ENCODE measurements at regions of chr6 and their contacts with region 1.

Region 1: DNA sequence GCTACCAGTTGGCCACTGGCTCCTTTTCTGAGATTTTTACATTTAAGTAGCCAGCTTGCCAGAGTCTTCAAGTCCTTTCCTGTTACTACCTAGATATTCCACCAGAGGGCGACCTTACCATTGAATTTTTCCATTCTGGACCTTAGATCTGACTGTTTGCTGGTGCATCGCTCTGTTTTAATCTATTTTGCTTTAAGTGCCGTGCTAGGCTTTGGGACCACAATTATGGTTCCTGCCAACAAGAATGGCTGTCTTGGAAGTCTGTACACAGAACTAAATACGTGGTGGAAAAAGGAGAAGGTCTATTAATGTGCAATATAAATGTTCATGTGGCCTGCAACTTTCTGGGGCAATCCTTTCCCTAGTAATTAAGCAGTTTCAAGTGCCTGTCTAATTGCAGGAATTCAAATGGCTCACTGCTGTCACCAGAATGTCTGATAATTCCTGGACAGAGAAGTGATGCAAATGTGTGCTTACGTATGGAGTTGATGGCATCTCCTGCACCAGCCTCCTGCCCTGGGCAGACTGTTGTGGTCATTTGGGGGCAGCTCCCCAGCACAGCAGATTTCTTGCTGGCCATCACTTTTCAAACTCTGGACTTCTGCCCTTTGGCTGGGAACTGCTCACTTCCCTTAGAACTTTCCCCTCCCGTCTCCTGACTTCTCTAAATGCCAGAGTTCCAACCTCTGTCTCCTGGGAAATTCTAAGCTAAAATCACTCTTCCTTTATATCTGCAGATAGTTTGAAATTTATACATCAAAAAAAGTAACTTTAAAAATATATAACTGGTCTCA is 5.6 kb upstream of the HLA-DOA start:
- DNase-seq: peak; percentile 92
- H3K4me3 Mint-ChIP-seq: no peak overlapping the region
- H3K27ac Mint-ChIP-seq: no peak overlapping the region
- H3K4me1 Mint-ChIP-seq: peaks cover 25% of the 10 kb centered on the region
- H3K27me3 Mint-ChIP-seq: peaks cover 20% of the 10 kb centered on the region

Region 2: GRCh38 chr6:32462609-32463008 is 552.4 kb before region 1 on chr6:
- intact Hi-C with region 1: loop called (anchors 5 kb)
- DNase-seq: peak; percentile 63
- H3K4me3 Mint-ChIP-seq: no peak overlapping the region
- H3K27ac Mint-ChIP-seq: no peak overlapping the region
- H3K4me1 Mint-ChIP-seq: peaks cover 4% of the 10 kb centered on the region
- H3K27me3 Mint-ChIP-seq: peaks cover 23% of the 10 kb centered on the region

Region 3: DNA sequence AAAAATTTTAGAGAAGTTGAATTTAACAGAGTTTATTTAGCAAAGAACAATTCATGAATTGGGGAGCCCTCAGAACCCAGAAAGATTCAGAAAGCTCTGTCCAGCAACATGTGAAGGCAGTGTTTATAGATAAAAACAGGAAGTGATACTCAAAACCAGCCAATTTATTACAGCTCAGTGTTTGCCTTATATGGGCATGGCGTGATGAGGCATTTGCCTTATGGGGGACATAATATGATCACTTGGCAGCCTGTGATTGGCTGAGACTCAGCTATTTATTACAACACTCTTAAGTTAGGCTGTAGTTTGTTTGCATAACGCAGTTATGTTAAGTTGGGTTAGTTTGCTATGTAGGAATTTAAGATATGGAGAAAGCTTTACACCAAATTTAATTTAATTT is 46.9 kb after region 1 on chr6:
- intact Hi-C with region 1: no loop called
- DNase-seq: no peak
- H3K4me3 Mint-ChIP-seq: no peak overlapping the region
- H3K27ac Mint-ChIP-seq: no peak overlapping the region
- H3K4me1 Mint-ChIP-seq: no peaks in the 10 kb centered on the region
- H3K27me3 Mint-ChIP-seq: peaks cover 7% of the 10 kb centered on the region

Region 4: GRCh38 chr6:33075568-33076405 is 60.7 kb after region 1 on chr6 and contains the start of gene HLA-DPB1:
- intact Hi-C with region 1: loop called (anchors 2 kb)
- DNase-seq: peak; percentile 85
- H3K4me3 Mint-ChIP-seq: peak within 1 kb of the TSS; percentile 80
- H3K27ac Mint-ChIP-seq: peak within 1 kb of the TSS; percentile 79
- H3K4me1 Mint-ChIP-seq: peaks cover 48% of the 10 kb centered on the region
- H3K27me3 Mint-ChIP-seq: peaks cover 2% of the 10 kb centered on the region
- total RNA-seq, gene HLA-DPB1: 4.7 and 6.2 TPM in 2 replicates

Region 5: GRCh38 chr6:33082702-33083101 is 67.7 kb after region 1 on chr6:
- intact Hi-C with region 1: loop called (anchors 1 kb)
- DNase-seq: peak; percentile 61
- H3K4me3 Mint-ChIP-seq: no peak overlapping the region
- H3K27ac Mint-ChIP-seq: no peak overlapping the region
- H3K4me1 Mint-ChIP-seq: peaks cover 19% of the 10 kb centered on the region
- H3K27me3 Mint-ChIP-seq: no peaks in the 10 kb centered on the region

Region 6: GRCh38 chr6:33091957-33092356 is 76.9 kb after region 1 on chr6:
- intact Hi-C with region 1: loop called (anchors 2 kb)
- DNase-seq: peak; percentile 86
- H3K4me3 Mint-ChIP-seq: no peak overlapping the region
- H3K27ac Mint-ChIP-seq: no peak overlapping the region
- H3K4me1 Mint-ChIP-seq: peaks cover 3% of the 10 kb centered on the region
- H3K27me3 Mint-ChIP-seq: peaks cover 33% of the 10 kb centered on the region

Region 7: DNA sequence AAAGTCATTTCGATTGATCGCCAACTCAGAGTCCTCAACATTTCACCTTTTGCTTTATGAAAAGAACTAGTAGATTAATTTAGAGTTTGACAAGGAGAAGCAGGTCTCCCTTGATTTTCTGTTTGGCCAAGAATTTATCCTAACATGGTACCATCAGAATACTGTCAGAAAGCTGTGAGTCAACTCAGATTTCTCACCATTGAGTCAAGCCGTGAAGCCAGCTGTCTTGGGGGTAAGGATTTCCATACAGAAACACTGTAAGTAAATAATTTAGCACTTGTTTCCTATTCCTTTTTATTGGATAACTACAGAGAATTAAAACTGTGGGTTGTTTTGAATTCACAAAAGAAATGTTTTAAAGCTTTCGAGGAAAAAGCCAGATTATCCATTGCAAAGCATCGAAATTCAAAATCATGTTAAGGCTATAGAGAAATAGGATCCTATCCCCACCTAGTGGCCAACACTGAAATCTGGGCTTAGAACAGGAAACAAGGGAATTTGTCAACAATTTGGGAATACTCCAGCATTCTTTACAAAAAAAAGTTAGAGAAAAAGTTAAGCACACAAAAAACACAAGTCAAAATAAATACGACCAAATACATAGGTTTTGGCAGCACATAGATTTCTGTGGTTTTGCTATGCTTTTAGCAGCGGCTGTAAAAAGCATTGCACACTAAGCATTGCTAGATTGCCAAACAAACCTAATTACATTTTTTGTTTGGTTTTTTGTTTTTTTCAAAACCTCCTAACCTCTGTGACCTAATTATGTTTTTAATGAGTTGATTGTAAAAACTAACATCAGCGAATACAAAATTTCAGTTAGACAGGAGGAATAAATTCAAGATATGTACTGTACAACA is 133.0 kb after region 1 on chr6:
- intact Hi-C with region 1: loop called (anchors 5 kb)
- DNase-seq: no peak
- H3K4me3 Mint-ChIP-seq: no peak overlapping the region
- H3K27ac Mint-ChIP-seq: no peak overlapping the region
- H3K4me1 Mint-ChIP-seq: peaks cover 3% of the 10 kb centered on the region
- H3K27me3 Mint-ChIP-seq: peaks cover 31% of the 10 kb centered on the region

Region 8: DNA sequence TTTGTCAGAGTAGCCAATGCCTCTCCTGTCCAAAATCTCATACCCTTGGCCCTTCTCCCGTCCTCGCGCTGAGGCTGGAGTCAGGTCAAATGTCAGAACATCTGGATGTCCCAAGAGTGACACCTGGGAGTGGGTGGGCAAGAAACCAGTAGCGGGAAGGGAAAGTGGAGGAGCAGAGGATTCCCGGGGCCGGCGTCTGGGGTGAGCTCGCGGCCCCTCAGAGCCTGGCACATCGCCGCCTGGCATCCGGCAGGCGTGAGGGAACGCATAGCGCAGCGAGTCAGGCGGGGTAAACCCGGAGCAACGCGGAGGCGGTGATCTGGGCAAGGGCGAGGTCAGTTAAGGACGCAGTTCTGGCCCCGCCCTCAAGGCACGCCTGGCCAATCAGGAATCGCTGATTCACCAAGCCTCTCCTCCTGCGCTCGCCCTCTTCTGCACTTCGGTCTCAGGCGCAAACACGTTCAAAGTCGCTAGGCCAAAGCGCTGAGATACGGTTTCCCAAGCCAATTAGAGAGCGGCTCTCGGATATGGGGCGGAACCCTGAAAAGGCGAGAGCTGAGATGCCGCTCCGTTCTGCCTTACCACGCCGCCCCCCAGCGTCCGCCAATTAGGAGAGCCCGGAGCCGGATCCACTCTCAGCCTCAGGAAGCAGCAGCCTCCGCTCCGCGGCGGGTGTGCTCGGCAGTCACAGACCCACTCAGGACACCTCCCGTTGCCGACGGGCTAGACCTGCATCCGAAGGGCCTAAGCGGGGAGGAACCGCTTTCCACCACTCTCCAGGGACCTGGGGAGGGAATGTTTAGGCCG is 234.1 kb after region 1 on chr6:
- intact Hi-C with region 1: loop called (anchors 2 kb)
- DNase-seq: peak; percentile 98
- H3K4me3 Mint-ChIP-seq: peak overlapping the region; percentile 91
- H3K27ac Mint-ChIP-seq: peak overlapping the region; percentile 94
- H3K4me1 Mint-ChIP-seq: peaks cover 34% of the 10 kb centered on the region
- H3K27me3 Mint-ChIP-seq: peaks cover 4% of the 10 kb centered on the region